Transverse colon (tissue), 4 donors: ENCODE measurements at regions of chr9 and their contacts with region 1.

Region 1: GRCh38 chr9:87656485-87656884 is 69.4 kb upstream of the CTSL start:
- DNase-seq: no peak
- H3K4me3 ChIP-seq: no peak overlapping the region
- H3K27ac ChIP-seq: peak overlapping the region in 1 of 4 donors; percentile 59
- H3K4me1 ChIP-seq: no peaks in the 10 kb centered on the region
- H3K27me3 ChIP-seq: no peaks in the 10 kb centered on the region
- CTCF ChIP-seq: no peak
- EP300 ChIP-seq: no peak
- POLR2A ChIP-seq: no peak

Region 2: GRCh38 chr9:86434039-86434726 is 1222.3 kb before region 1 on chr9:
- in situ Hi-C with region 1: no loop called
- intact Hi-C with region 1: loop called (anchors 5 kb)
- DNase-seq: no peak
- H3K4me3 ChIP-seq: no peak overlapping the region
- H3K27ac ChIP-seq: peak overlapping the region in 1 of 4 donors; percentile 42
- H3K4me1 ChIP-seq: no peaks in the 10 kb centered on the region
- H3K27me3 ChIP-seq: peaks cover 4% of the 10 kb centered on the region
- CTCF ChIP-seq: peak; percentile 55 to 66 (median 59)
- EP300 ChIP-seq: no peak
- POLR2A ChIP-seq: no peak

Region 3: DNA sequence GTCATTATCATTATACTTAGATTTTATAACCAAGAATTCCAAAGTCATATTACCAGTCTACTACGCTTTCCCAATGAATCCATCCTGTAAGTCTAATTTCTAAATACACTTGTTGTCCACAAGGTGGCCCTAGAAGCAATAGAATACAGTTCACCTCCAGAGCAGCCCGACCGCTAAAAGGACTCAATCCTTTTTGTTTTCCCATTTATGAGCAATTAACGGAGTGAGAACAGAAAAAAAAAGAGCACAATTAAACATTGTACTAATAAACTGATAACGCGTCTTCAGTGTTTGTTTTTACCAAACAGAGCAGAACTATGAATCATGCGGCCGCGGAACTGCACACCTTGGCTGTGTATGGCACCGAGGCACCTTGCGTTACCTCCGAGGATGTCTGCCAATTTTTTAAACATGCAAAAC is 319.6 kb before region 1 on chr9:
- in situ Hi-C with region 1: loop called in 3 of 4 experiments (anchors 5 to 10 kb)
- intact Hi-C with region 1: loop called (anchors 5 kb)
- DNase-seq: no peak
- H3K4me3 ChIP-seq: peak overlapping the region; percentile 9 to 36 (median 17)
- H3K27ac ChIP-seq: no peak overlapping the region
- H3K4me1 ChIP-seq: peaks cover 0 to 12% (median 5%) of the 10 kb centered on the region in 4 donors
- H3K27me3 ChIP-seq: peaks cover 18% of the 10 kb centered on the region
- CTCF ChIP-seq: peak; percentile 66 to 81 (median 74)
- EP300 ChIP-seq: no peak
- POLR2A ChIP-seq: no peak